ENCODE measurements at regions of chr1 and their contacts with region 1.

Region 1: GRCh38 chr1:234656856-234657654 is 47.1 kb upstream of the IRF2BP2 start:
- H3K4me3 Mint-ChIP-seq: peak overlapping the region; percentile 67
- H3K27ac Mint-ChIP-seq: peak overlapping the region; percentile 91
- H3K4me1 Mint-ChIP-seq: peaks cover 58% of the 10 kb centered on the region
- H3K27me3 Mint-ChIP-seq: no peaks in the 10 kb centered on the region

Region 2: GRCh38 chr1:234544087-234544579 is 112.9 kb before region 1 on chr1:
- intact Hi-C with region 1: no loop called
- H3K4me3 Mint-ChIP-seq: no peak overlapping the region
- H3K27ac Mint-ChIP-seq: peak overlapping the region; percentile 17
- H3K4me1 Mint-ChIP-seq: peaks cover 33% of the 10 kb centered on the region
- H3K27me3 Mint-ChIP-seq: peaks cover 5% of the 10 kb centered on the region

Region 3: GRCh38 chr1:234621657-234622335 is 35.3 kb before region 1 on chr1:
- intact Hi-C with region 1: loop called (anchors 2 kb)
- H3K4me3 Mint-ChIP-seq: no peak overlapping the region
- H3K27ac Mint-ChIP-seq: no peak overlapping the region
- H3K4me1 Mint-ChIP-seq: peaks cover 36% of the 10 kb centered on the region
- H3K27me3 Mint-ChIP-seq: no peaks in the 10 kb centered on the region

Region 4: GRCh38 chr1:234699795-234700665 is 43.0 kb after region 1 on chr1:
- intact Hi-C with region 1: no loop called
- H3K4me3 Mint-ChIP-seq: no peak overlapping the region
- H3K27ac Mint-ChIP-seq: peak overlapping the region; percentile 17
- H3K4me1 Mint-ChIP-seq: peaks cover 44% of the 10 kb centered on the region
- H3K27me3 Mint-ChIP-seq: no peaks in the 10 kb centered on the region

Region 5: GRCh38 chr1:234722904-234723720 is 66.1 kb after region 1 on chr1:
- intact Hi-C with region 1: loop called (anchors 5 kb)
- H3K4me3 Mint-ChIP-seq: peak overlapping the region; percentile 57
- H3K27ac Mint-ChIP-seq: peak overlapping the region; percentile 99
- H3K4me1 Mint-ChIP-seq: peaks cover 97% of the 10 kb centered on the region
- H3K27me3 Mint-ChIP-seq: no peaks in the 10 kb centered on the region